HepG2 (cell line): ENCODE measurements at regions of chr18 and their contacts with region 1.

Region 1: DNA sequence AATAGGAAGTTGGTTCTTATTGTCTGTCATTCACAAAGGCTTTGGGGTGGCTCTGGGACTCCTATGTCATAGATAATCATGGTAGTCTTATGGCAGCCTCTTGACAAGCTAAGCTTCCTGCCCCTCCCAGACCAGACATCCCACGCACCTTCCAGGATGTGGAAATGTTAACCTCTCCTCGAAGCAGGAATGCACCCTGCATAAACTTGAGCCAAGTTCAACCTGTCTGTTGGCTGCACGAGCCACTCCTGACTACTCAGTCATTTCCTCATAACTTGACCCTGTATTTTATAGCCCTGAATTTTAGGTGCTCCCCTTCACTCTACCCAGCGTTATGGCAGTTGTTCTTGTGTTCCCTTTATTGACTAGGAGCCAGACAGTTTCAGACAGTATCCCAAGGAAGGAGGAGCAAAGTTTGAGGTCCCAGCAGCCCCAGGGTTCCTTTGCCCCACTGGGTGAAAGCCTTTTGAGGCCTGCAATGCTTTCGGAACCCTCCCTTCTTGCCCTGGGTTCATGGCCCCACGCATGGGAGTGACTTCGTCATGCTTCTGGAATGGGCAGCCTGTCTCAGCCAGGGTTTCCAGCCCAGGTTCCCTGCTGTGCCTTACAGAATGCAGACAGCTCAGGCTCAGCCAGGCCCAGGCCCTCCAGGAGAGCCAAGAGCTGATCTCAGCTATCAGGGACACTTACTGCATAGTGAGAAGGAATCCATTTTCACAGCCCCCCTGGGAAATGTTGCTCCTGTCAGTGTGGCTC is 15.6 kb upstream of the INO80C start:
- DNase-seq: no peak
- ATAC-seq: peak; percentile 23; the same call in 1 of the 3 replicates
- H3K4me3 ChIP-seq: no peak overlapping the region
- H3K27ac ChIP-seq: no peak overlapping the region
- H3K4me1 ChIP-seq: peaks cover 12% of the 10 kb centered on the region
- H3K27me3 ChIP-seq: peaks cover 0 to 3% of the 10 kb centered on the region in 2 experiments; a peak in 1 of 5 replicates
- CTCF ChIP-seq: no peak
- EP300 ChIP-seq: no peak
- POLR2A ChIP-seq: no peak
- RAD21 ChIP-seq: no peak

Region 2: GRCh38 chr18:35386600-35387351 is 126.6 kb before region 1 on chr18:
- CTCF ChIA-PET with region 1: interaction called, 4 read pairs
- POLR2A ChIA-PET with region 1: no interaction called
- in situ Hi-C with region 1: no loop called
- intact Hi-C with region 1: loop called (anchors 2 kb)
- DNase-seq: peak; percentile 70
- ATAC-seq: peak; percentile 87
- H3K4me3 ChIP-seq: no peak overlapping the region
- H3K27ac ChIP-seq: no peak overlapping the region
- H3K4me1 ChIP-seq: peaks cover 7% of the 10 kb centered on the region
- H3K27me3 ChIP-seq: 0 out of 5 replicates have a peak, but pooled peaks cover 0 to 8% of the 10 kb centered on the region in 2 experiments
- CTCF ChIP-seq: peak; percentile 79
- EP300 ChIP-seq: no peak
- POLR2A ChIP-seq: no peak
- RAD21 ChIP-seq: peak; percentile 39